PC-9 (cell line): ENCODE measurements at regions of chr13 and their contacts with region 1.

Region 1: DNA sequence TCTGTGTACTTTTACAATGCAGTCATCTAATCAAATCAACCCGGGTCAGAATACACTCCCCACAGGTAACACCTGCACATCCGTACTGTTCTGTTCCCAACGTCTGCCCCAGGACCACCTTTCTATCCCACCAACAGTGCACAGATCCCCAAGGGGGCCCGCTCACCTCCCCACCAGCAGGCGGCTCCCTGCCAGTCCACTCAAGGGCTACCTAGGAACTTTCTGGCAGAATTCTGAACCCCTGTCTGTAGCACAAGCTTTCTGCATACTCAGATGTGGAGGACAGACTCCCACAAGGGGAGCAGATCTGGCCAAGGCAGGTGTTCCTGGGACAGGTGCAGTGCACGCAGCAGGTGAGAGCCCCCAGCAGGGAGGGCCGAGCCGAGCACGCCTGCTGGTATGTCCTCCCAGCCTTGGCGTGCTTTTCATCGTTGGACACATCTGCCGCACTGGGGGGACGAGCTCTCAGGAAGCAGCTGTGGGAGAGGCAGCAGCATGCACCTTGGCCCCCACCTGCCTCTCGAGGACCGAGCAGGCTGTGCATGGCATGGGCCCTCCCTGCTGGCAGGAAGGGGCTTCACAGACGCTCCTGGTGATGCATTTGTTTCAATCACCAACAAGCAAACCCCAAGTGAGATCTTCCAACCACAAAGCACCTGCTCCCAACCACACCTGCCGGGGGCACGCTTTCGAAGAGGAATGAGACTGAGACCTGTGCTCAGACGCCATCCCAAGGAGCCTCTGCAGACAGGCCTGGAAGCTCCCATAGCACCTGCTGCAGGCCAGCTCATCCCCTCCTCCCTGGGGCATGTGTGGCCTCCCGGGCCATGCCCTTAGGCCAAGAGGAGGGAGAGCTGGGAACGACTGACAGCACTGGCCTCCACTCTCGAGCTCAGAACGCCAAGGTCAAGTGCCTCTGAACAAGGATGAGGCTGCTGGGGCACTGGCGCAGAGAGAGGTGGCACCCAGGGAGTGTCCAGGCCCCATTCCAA is 35.9 kb downstream of the RAB20 start:
- DNase-seq: peak; percentile 72 to 90
- H3K4me3 ChIP-seq: no peak overlapping the region
- H3K27ac ChIP-seq: peak overlapping the region; percentile 71
- H3K4me1 ChIP-seq: peaks cover 79% of the 10 kb centered on the region
- H3K27me3 ChIP-seq: no peaks in the 10 kb centered on the region
- CTCF ChIP-seq: no peak

Region 2: DNA sequence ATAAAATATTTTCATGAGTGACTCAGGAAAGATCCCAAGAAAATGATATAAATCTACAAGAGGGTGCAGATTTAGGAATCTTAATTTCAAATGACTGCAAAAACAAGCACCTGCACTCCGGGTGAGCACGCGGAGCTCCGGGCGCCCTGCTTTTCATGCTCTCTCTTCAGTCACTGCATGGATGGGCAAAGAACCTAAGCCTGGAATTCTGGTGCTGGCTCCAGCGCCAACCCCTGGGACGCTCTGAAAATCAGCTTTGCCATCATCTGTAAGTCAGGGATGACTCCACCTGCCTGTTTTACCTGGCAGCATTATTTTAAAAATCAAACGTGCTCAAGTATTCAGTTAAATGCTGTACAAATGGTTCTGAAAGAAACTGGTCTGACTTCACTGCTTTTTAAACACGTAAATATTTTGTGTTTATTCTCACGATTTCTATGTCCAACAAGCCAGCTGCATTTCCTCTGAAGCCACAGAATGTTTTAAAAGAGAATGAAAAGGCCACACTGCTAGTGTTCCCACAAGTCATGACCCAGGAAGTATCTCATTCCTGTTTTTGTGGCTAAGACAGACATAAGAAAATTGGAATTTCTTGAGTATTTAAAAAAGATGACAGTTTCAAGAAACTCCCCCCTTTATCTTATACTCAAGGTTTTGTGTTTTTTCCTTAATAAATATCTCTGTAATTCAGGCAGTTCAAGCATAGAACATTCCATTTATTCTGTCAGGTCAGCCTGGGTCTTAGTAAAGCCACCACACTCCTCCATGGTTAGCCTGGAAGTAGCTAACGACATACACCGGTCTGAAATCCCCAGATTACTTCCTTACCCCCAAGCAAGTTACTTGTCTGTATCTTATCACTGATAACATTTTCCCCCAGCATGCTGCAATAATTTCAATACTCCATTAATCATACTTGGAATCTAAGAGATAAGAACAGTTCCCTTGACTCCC is 299.7 kb before region 1 on chr13:
- CTCF ChIA-PET with region 1: no interaction called
- POLR2A ChIA-PET with region 1: no interaction called
- intact Hi-C with region 1: loop called (anchors 5 kb)
- DNase-seq: peak in 1 of 2 experiments; percentile 94
- H3K4me3 ChIP-seq: no peak overlapping the region
- H3K27ac ChIP-seq: peak overlapping the region; percentile 60
- H3K4me1 ChIP-seq: peaks cover 29% of the 10 kb centered on the region
- H3K27me3 ChIP-seq: no peaks in the 10 kb centered on the region
- CTCF ChIP-seq: no peak

Region 3: DNA sequence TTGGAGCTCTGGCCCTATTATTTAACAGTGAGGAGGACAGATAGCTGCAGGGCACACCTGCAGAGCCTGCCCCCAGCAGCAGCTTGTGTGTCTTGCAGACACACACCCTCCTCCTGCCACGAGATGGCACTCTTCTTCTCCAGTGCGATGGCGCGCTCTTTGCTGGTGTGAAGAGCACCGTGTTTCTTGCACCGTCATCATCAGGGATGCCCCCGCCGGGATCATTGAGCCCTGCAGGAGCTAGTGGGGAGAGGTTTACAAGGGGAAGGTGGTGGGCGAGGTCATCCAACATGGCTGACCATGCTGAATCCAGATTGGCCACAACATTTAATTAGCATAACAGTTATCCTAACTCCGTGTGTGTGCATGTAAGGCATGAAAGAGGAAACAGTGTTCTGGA is 69.7 kb before region 1 on chr13:
- CTCF ChIA-PET with region 1: interaction called, 31 read pairs
- POLR2A ChIA-PET with region 1: interaction called, 3 read pairs
- intact Hi-C with region 1: loop called (anchors 1 kb)
- DNase-seq: peak; percentile 78 to 83
- H3K4me3 ChIP-seq: no peak overlapping the region
- H3K27ac ChIP-seq: no peak overlapping the region
- H3K4me1 ChIP-seq: peaks cover 26% of the 10 kb centered on the region
- H3K27me3 ChIP-seq: no peaks in the 10 kb centered on the region
- CTCF ChIP-seq: peak; percentile 96

Region 4: DNA sequence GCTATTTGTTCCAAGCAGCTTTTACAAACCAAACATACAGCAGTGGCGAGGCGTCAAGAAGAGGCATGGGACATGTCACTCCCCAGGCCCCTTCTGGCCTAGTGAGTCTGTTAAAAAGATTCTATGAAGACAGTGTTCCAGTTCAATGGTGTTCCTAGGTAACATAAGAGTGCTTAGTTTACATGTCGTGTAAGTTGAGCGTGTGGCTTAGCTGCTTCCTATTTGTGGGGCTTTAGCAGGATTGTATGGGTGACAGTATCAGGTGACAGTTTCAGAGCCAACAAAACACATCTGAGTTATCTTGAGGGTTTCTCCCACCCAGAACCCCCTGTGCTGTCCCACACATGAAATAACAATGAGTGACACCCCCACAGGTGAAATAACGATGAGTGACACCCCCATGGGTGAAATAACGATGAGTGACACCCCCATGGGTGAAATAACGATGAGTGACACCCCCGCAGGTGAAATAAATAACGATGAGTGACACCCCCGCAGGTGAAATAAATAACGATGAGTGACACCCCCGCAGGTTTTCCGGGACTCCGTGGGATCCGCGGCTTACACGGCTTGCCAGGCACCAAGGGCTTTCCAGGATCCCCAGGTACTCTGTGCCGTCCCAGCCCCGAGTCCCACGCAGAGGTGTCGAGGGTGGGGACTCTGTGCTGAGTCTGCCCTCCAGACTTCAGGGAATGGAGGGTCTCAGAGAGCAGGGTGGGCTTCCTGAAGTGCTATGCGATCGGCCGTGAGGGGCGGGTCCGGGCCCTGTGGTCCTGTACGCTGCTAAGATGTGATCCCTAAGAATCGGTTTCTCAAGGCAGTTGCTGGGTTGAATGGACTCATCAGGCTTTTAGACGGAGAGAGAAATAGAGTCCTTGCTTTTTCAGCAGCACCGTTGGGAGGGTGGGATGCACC is 32.7 kb before region 1 on chr13:
- CTCF ChIA-PET with region 1: no interaction called
- POLR2A ChIA-PET with region 1: no interaction called
- intact Hi-C with region 1: no loop called
- DNase-seq: no peak
- H3K4me3 ChIP-seq: no peak overlapping the region
- H3K27ac ChIP-seq: no peak overlapping the region
- H3K4me1 ChIP-seq: no peaks in the 10 kb centered on the region
- H3K27me3 ChIP-seq: no peaks in the 10 kb centered on the region
- CTCF ChIP-seq: no peak

Region 5: GRCh38 chr13:110546930-110547329 is 21.3 kb after region 1 on chr13:
- CTCF ChIA-PET with region 1: interaction called, 5 read pairs
- POLR2A ChIA-PET with region 1: interaction called, 4 read pairs
- intact Hi-C with region 1: loop called (anchors 1 kb)
- DNase-seq: peak; percentile 90 to 97
- H3K4me3 ChIP-seq: no peak overlapping the region
- H3K27ac ChIP-seq: peak overlapping the region; percentile 38
- H3K4me1 ChIP-seq: peaks cover 31% of the 10 kb centered on the region
- H3K27me3 ChIP-seq: no peaks in the 10 kb centered on the region
- CTCF ChIP-seq: no peak

Region 6: GRCh38 chr13:110593430-110594130 is 68.0 kb after region 1 on chr13:
- CTCF ChIA-PET with region 1: no interaction called
- POLR2A ChIA-PET with region 1: interaction called, 3 read pairs
- intact Hi-C with region 1: loop called (anchors 1 kb)
- DNase-seq: peak in 1 of 2 experiments; percentile 59
- H3K4me3 ChIP-seq: no peak overlapping the region
- H3K27ac ChIP-seq: no peak overlapping the region
- H3K4me1 ChIP-seq: peaks cover 33% of the 10 kb centered on the region
- H3K27me3 ChIP-seq: no peaks in the 10 kb centered on the region
- CTCF ChIP-seq: peak; percentile 78

Region 7: DNA sequence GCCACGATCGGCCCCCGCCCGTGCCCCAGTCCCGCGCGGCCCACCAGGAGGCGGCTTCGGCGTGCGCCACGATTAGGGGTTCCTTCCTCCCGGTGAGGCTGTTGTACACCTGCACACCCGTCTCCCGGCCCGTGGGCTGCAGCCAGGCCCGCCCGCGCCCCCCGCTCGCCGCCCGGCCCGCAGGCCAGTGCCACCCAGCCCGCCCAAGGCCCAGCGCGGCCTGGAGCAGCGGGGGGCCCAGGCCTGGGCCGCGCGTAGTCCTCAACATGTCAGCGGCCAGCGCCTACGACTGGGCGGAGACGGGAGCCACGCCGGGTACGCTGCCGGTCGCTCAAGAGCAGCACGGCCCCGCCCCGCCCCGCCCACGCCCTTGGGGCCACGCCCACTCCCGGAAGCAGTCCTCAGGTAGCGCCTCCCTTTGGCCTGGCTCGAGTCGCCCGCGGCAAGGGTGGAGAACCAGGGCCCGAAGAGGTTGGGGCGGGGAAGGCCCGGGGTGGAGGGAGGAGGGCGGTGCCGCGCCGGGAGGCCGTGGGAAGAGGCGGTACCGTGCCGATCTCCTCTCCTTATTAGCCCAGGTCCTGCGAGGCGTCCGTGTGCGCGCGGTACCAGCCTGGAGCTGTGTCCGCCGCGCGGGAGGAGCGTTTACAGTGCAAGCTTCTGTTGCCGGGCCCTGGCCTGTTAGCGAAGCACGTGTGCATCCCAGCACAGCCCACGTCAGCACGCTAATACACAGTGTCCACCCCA is 180.4 kb after region 1 on chr13 and contains the start of gene CARS2:
- CTCF ChIA-PET with region 1: no interaction called
- POLR2A ChIA-PET with region 1: no interaction called
- intact Hi-C with region 1: loop called (anchors 1 kb)
- DNase-seq: peak; percentile 95 to 96
- H3K4me3 ChIP-seq: peak within 1 kb of the TSS; percentile 82
- H3K27ac ChIP-seq: peak within 1 kb of the TSS; percentile 93
- H3K4me1 ChIP-seq: peaks cover 29% of the 10 kb centered on the region
- H3K27me3 ChIP-seq: no peaks in the 10 kb centered on the region
- CTCF ChIP-seq: no peak
- total RNA-seq, gene CARS2: 57.1 and 67.0 TPM in 2 replicates